ENCODE measurements at regions of chr3 and their contacts with region 1.

Region 1: DNA sequence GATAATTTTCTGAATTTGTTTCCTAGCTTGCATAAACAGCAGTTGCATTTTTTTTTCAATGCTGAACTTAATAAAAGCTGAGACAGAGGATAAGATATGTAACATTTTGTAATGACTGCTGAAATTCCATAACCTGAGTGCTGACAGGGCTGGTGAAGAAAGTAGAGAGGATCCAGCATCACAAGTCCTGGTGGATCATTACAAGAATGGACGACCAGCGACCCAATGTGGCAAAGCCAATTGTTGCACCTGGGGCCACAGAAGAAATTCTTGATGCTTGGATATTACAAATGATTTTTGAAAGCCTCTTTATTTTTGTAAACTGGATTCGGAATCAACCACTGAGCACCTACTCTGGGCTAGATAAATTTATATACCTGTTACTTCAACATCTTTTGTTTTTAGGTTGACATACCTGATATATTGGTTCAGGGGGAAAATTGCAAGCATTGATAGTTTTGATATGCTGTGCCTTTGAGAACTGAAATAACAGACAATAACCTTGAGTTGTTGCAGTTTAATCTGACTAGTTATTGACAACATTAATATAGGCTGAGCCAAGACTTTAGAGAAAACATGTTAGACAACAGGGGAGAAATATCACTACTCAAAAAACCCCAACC is 3.9 kb upstream of the ACTL6A start:
- DNase-seq: peak; percentile 56 to 84
- H3K4me3 ChIP-seq: no peak overlapping the region
- H3K27ac ChIP-seq: no peak overlapping the region
- H3K4me1 ChIP-seq: peaks cover 3 to 10% (median 9%) of the 10 kb centered on the region in 4 donors
- H3K27me3 ChIP-seq: no peaks in the 10 kb centered on the region
- CTCF ChIP-seq: peak in 5 of 7 experiments; percentile 49 to 76 (median 70)
- EP300 ChIP-seq: no peak
- POLR2A ChIP-seq: no peak

Region 2: DNA sequence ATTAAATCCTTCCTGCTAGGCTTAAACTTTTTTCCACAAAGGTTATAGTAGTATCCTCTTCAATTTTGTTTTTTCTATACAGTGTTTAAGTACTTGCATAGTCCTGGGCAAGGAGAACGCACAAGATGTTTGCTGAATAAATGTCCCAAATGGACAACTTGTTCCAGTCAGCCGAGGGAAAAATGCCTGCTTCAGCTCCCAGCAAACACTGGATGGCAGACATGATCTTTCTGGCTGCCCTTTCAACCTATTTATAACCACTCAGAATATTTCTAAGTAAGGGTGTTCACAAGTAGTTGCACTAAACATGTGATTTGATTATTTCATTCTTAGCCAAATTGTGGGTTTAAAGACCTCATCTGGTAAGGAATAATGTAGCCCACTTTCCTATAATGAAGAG is 137.4 kb before region 1 on chr3:
- intact Hi-C with region 1: loop called (anchors 10 kb)
- DNase-seq: peak in 1 of 2 donors; percentile 61
- H3K4me3 ChIP-seq: no peak overlapping the region
- H3K27ac ChIP-seq: no peak overlapping the region
- H3K4me1 ChIP-seq: peaks cover 0 to 11% (median 3%) of the 10 kb centered on the region in 4 donors
- H3K27me3 ChIP-seq: no peaks in the 10 kb centered on the region
- CTCF ChIP-seq: peak in 4 of 7 experiments; percentile 17 to 27 (median 24)
- EP300 ChIP-seq: no peak
- POLR2A ChIP-seq: no peak

Region 3: DNA sequence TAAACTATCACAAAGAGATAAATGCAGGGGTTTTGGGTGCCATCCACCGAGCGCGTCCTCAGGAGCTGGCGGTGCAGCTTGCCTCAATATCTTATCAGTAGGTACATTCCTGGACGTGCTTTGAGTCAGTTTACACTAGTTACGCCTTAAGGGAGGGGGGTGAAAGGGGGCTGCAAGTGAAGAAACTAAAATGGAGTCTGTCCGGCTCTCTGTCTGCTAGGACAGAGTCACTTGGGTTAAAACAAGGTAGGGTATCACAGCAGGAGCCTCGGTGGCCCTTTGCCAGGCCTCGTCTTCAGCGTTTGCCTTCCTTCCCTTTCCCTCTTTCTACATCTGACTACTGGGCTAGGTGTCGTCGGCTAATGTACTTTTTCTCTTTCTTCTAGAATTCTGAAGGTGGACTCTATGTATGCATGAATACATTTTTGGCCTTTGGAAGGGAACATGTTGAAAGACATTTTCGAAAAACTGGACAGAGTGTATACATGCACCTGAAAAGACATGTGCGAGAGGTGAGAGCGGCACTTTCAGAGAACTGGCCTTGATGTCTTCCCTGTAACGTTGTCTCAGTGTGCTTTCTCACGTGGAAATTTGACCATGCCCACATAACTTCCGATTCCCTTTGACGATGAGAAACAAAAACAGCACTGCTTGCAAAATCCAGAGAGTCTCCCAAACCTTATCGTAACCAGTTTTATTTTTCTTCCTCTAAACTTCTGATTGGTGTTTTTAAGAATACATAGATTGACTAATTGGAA is 122.8 kb after region 1 on chr3:
- intact Hi-C with region 1: no loop called
- DNase-seq: peak; percentile 17 to 30
- H3K4me3 ChIP-seq: no peak overlapping the region
- H3K27ac ChIP-seq: peak overlapping the region in 1 of 5 donors; percentile 14
- H3K4me1 ChIP-seq: peaks cover 0 to 34% (median 17%) of the 10 kb centered on the region in 4 donors
- H3K27me3 ChIP-seq: no peaks in the 10 kb centered on the region
- CTCF ChIP-seq: no peak
- EP300 ChIP-seq: no peak
- POLR2A ChIP-seq: no peak